Activated T-helper 1 cell treated with anti-CD3 and anti-CD28 coated beads, Interleukin-12 subunit alpha, Interleukin-12 subunit beta, Interleukin-2, Interleukin-4 antibody, amounts not matched to agents 30 ng/mL and 10 ng/mL and 1 ng/mL, durations not matched to agents 14 hours and 24 hours and 36 hours (primary cell): ENCODE measurements at regions of chr5 and their contacts with region 1.

Region 1: DNA sequence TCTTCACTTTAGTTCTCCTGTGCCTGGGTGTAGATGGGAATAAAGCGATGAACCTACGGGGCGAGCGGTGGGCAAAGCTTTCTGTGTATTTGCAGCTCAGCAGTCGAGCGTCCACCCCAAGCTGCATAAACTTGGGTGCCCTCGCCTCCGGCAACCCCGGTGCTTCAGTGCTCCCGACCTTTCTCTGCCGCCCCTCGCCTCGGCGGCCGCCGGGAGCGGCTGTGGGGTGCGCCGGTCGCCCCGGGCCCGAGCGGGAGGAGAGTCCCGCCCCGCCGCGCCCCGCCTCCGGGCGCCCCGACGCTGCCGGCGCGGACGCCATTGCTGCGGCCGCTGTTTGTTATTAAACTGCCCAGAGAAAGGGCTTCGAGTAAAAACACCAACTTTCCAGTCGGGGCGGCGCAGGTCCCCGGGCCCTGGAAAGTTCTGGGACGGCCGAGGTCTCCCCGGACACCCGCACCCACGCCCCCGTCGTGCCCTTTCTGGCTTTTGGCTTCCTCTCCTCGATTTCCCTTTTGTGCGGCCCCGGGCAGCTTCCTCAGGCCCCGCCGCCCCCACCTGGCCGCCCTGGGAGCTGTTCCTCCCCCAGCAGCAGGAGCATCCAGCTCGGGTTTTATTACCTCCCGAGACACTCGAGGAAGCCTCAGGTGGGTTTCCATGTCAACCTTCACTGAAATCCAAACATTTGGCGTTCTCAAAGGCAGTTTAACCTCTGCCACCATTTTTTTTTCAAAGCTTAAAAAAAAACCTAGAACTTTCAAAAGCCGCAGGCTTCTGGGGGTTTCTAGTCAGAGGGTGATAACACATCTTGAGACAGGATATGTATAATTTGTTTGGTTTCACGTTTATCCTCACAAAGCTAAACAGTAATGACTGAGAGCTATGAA is 334.3 kb downstream of the CWC27 start:
- DNase-seq: no peak
- H3K4me3 Mint-ChIP-seq: peak overlapping the region; percentile 79
- H3K27ac Mint-ChIP-seq: peak overlapping the region; percentile 42
- H3K4me1 Mint-ChIP-seq: peaks cover 30% of the 10 kb centered on the region
- H3K27me3 Mint-ChIP-seq: peaks cover 25% of the 10 kb centered on the region

Region 2: DNA sequence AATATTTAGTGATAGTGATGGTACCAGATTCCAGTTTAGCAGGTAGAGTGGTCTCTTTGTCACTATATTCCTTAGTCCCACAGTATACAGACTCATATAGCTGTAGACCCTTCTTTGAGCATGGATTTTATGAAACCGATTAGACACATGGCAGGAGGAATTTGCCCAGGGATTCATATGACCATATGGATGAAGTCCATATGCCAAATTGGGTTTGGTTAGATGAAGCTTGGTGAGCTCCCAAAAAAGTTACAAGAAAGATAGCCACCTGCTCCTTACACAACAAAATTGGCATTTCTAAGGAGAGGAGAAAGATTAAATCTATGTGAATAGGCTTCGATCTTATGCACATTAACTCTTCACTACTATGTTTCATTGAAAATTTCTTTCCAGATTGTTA is 122.9 kb before region 1 on chr5:
- intact Hi-C with region 1: loop called (anchors 5 kb)
- DNase-seq: no peak
- H3K4me3 Mint-ChIP-seq: no peak overlapping the region
- H3K27ac Mint-ChIP-seq: no peak overlapping the region
- H3K4me1 Mint-ChIP-seq: peaks cover 6% of the 10 kb centered on the region
- H3K27me3 Mint-ChIP-seq: no peaks in the 10 kb centered on the region

Region 3: GRCh38 chr5:65076251-65076869 is 26.7 kb before region 1 on chr5:
- intact Hi-C with region 1: loop called (anchors 2 kb)
- DNase-seq: peak; percentile 44
- H3K4me3 Mint-ChIP-seq: no peak overlapping the region
- H3K27ac Mint-ChIP-seq: no peak overlapping the region
- H3K4me1 Mint-ChIP-seq: peaks cover 21% of the 10 kb centered on the region
- H3K27me3 Mint-ChIP-seq: peaks cover 18% of the 10 kb centered on the region

Region 4: GRCh38 chr5:65151614-65152013 is 48.5 kb after region 1 on chr5:
- intact Hi-C with region 1: loop called (anchors 1 kb)
- DNase-seq: no peak
- H3K4me3 Mint-ChIP-seq: no peak overlapping the region
- H3K27ac Mint-ChIP-seq: no peak overlapping the region
- H3K4me1 Mint-ChIP-seq: no peaks in the 10 kb centered on the region
- H3K27me3 Mint-ChIP-seq: no peaks in the 10 kb centered on the region

Region 5: DNA sequence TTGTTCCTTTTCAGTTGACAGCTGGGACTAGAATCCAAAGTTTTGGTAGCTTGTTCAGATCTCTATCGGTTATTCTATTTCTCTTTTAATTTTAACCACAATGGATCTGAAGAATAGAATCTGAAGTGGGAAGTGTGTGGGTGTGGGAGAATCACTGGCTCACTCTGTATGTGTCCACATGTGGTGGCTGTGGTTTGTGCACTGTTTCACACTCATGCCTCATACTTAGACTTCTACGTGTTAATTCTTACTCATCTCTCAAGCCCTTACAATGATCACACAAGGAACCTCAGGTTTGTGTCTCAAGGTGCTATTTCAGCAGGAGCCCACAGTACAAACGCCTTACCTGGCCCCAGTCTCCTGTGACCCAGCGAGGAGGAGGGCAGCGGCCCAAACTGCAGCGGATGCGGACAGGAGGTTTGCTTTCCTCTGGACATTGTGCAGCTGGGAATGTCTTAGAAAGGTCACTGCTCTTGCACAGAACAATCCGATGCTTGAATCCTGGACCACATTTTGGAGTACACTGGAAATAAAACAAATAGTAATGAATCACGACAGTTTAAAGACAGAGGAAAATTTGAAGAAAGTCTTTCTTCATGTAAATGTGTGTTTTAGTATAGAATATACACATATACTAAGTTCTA is 69.5 kb after region 1 on chr5:
- intact Hi-C with region 1: loop called (anchors 2 kb)
- DNase-seq: no peak
- H3K4me3 Mint-ChIP-seq: no peak overlapping the region
- H3K27ac Mint-ChIP-seq: no peak overlapping the region
- H3K4me1 Mint-ChIP-seq: peaks cover 6% of the 10 kb centered on the region
- H3K27me3 Mint-ChIP-seq: peaks cover 9% of the 10 kb centered on the region

Region 6: DNA sequence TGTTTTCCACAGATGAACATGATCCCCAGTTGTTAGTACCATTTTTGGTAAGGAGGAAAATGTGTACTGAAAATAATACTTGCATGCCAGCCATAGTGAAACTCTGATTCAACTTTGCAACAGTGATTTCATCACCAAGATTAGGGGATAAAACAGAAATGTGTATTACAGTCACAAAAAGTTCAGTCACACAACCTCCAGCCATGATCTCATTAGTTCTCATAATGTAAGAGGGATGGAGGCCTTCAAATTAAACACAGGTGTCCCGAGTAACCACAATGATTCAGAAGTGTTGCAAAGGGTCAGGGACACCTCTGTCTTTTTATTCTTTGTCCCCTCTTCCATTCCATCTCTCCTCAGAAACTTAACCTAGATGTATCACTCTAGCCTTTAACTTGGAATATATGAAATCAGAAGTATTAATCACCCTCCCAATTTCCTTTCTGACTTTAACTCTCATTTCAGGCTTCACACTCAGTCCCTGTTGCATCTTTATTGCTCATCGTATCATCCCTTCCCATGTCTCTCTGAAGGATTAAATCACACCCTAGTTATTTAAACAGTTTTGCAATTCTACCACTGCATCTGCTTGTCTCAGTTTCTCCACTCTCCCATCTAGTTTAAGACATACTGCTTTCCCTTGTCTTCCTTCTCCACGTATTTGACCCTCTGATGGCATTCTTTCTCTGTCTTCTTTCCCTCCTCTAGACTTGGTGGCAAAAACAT is 87.4 kb after region 1 on chr5:
- intact Hi-C with region 1: loop called (anchors 5 kb)
- DNase-seq: no peak
- H3K4me3 Mint-ChIP-seq: no peak overlapping the region
- H3K27ac Mint-ChIP-seq: peak overlapping the region; percentile 30
- H3K4me1 Mint-ChIP-seq: no peaks in the 10 kb centered on the region
- H3K27me3 Mint-ChIP-seq: peaks cover 4% of the 10 kb centered on the region